OCI-LY7 (cell line): ENCODE measurements at regions of chr6 and their contacts with region 1.

Region 1: DNA sequence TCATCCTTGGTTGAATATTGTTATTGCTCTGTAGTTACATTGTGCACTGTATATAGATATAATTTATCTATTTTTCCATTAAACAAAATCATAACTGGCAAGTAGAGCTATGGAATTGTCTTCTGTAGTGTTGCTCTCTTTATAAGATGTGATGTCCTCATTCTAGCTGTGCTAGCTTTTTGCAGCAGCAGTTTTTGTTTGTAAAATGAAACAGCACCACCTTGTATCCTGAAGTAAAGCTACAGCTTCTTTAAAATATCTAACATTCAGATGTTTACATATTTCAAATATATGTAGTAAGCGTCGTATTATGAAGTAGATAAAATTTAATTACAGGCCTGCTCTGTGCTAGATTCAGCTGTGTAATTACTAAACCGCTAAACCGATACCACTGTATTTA is 328.8 kb upstream of the MANEA start:
- DNase-seq: no peak
- H3K4me3 ChIP-seq: no peak overlapping the region
- H3K27ac ChIP-seq: no peak overlapping the region
- H3K4me1 ChIP-seq: peaks cover 10% of the 10 kb centered on the region
- CTCF ChIP-seq: no peak

Region 2: DNA sequence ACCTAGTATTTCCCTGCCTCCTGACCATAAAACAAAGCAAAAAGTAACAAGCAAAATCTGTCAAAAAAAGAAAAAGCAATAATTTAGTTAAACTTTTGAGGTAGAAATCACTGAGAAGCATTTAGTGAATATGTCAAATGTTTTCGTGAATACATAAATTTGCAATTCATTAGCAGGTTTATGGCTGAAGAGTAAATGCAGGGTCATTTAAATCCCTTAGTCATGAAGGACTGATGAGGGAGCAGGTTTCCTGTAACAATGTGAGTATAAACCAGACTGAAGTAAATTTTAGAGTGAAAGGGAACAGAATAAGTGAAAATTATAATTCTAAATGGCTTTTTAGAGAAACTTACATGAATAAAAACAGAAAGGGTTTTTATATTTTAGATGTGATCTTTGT is 15.3 kb after region 1 on chr6:
- CTCF ChIA-PET with region 1: no interaction called
- POLR2A ChIA-PET with region 1: interaction called, 3 read pairs
- intact Hi-C with region 1: loop called (anchors 1 kb)
- DNase-seq: no peak
- H3K4me3 ChIP-seq: no peak overlapping the region
- H3K27ac ChIP-seq: no peak overlapping the region
- H3K4me1 ChIP-seq: no peaks in the 10 kb centered on the region
- CTCF ChIP-seq: no peak